ENCODE measurements at regions of chr17 and their contacts with region 1.

Region 1: DNA sequence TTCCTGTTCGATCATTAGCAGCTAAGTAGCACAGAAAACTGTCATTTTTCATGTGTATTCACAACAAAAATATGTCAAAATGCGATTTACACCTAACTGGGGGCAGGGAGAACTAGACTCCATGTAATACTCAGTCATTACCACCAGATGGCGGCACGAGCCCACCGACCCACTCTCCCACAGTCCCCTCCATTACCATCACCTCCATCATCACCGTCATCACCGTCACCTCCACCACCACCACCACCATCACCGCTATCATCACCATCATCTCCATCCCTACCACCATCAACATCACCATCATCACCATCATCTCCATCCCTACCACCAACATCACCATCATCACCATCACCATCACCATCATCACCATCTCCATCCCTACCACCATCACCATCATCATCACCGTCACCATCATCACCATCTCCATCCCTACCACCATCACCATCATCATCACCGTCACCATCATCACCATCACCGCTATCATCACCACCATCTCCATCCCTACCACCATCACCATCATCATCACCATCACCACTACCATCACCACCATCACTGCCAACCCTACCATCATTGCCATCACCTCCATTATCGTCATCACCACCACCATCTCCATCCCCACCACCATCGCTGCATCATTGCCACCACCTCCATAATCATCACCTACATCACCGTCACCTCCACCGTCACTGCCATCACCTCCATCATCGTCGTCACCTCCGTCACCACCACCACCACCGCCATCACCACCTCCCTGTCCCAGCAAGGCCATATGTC is 14.4 kb downstream of the NDUFAF8 start:
- DNase-seq: peak; percentile 43 to 62
- ATAC-seq: peak; percentile 12 to 47; a peak in 3 of 6 replicates
- H3K4me3 ChIP-seq: no peak overlapping the region
- H3K27ac ChIP-seq: no peak overlapping the region
- H3K4me1 ChIP-seq: peaks cover 18% of the 10 kb centered on the region
- CTCF ChIP-seq: peak; percentile 92
- EP300 ChIP-seq: no peak
- POLR2A ChIP-seq: no peak
- RAD21 ChIP-seq: peak; percentile 95 to 98

Region 2: GRCh38 chr17:81090361-81091136 is 163.0 kb before region 1 on chr17:
- CTCF ChIA-PET with region 1: no interaction called
- POLR2A ChIA-PET with region 1: no interaction called
- DNase-seq: peak; percentile 36 to 44
- ATAC-seq: peak in 1 of 2 experiments; percentile 16; a peak in 2 of 6 replicates
- H3K4me3 ChIP-seq: no peak overlapping the region
- H3K27ac ChIP-seq: peak overlapping the region in 1 of 2 experiments; percentile 17; a peak in 2 of 6 replicates
- H3K4me1 ChIP-seq: peaks cover 42% of the 10 kb centered on the region
- CTCF ChIP-seq: no peak
- EP300 ChIP-seq: no peak
- POLR2A ChIP-seq: peak; percentile 7; the same call in 1 of the 2 replicates
- RAD21 ChIP-seq: no peak

Region 3: DNA sequence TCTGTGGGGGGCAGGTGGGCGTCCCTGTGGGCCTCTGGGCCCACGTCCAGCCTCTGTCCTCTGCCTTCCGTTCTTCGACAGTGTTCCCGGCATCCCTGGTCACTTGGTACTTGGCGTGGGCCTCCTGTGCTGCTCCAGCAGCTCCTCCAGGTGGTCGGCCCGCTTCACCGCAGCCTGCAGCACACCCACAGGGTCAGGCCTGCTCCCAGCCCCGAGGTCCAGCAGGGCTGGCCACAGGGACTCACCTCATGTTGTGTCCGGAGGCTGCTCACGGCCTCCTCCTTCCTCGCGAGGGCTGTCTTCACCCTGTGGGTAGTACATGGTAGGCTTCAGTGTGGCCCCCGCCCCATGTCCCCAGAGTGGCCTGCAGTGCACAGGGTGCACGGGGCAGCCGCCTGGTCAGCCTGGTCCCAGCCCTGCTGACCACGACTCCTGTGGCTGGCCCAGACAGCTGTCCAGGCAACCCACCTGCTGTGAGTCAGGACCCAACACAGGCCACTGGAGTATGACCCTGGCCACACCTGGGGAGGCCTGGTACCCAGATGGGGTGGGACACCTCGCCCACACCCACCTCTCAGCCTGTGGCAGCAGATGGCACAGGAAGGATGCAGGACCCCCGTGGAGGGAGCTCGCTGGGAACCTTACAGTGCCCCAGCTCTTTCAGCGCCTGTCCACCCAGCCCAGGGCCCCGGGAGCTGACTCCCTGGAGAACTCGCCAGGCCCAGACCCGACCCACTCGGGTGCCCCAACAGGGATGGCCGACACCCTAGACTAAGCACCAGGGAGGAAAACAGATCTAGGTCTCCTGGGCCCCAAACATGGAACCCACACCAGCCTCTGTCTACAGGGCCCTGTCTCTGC is 63.6 kb before region 1 on chr17:
- CTCF ChIA-PET with region 1: no interaction called
- POLR2A ChIA-PET with region 1: no interaction called
- DNase-seq: peak; percentile 46 to 52
- ATAC-seq: peak; percentile 45 to 80; a peak in 5 of 6 replicates
- H3K4me3 ChIP-seq: no peak overlapping the region
- H3K27ac ChIP-seq: no peak overlapping the region
- H3K4me1 ChIP-seq: no peaks in the 10 kb centered on the region
- CTCF ChIP-seq: peak; percentile 25; the same call in 2 of the 3 replicates
- EP300 ChIP-seq: no peak
- POLR2A ChIP-seq: no peak
- RAD21 ChIP-seq: peak in 1 of 2 experiments; percentile 60; a peak in 4 of 5 replicates

Region 4: GRCh38 chr17:81213978-81214377 is 39.6 kb before region 1 on chr17:
- CTCF ChIA-PET with region 1: no interaction called
- POLR2A ChIA-PET with region 1: no interaction called
- DNase-seq: no peak
- ATAC-seq: no peak
- H3K4me3 ChIP-seq: no peak overlapping the region
- H3K27ac ChIP-seq: no peak overlapping the region
- H3K4me1 ChIP-seq: no peaks in the 10 kb centered on the region
- CTCF ChIP-seq: no peak
- EP300 ChIP-seq: no peak
- POLR2A ChIP-seq: no peak
- RAD21 ChIP-seq: no peak

Region 5: GRCh38 chr17:81270279-81270678 is 16.7 kb after region 1 on chr17:
- CTCF ChIA-PET with region 1: interaction called, 129 read pairs
- POLR2A ChIA-PET with region 1: no interaction called
- DNase-seq: no peak
- ATAC-seq: no peak
- H3K4me3 ChIP-seq: no peak overlapping the region
- H3K27ac ChIP-seq: no peak overlapping the region
- H3K4me1 ChIP-seq: no peaks in the 10 kb centered on the region
- CTCF ChIP-seq: no peak
- EP300 ChIP-seq: no peak
- POLR2A ChIP-seq: no peak
- RAD21 ChIP-seq: no peak

Region 6: GRCh38 chr17:81285179-81285878 is 31.8 kb after region 1 on chr17:
- CTCF ChIA-PET with region 1: interaction called, 129 read pairs
- POLR2A ChIA-PET with region 1: no interaction called
- DNase-seq: no peak
- ATAC-seq: no peak
- H3K4me3 ChIP-seq: no peak overlapping the region
- H3K27ac ChIP-seq: no peak overlapping the region
- H3K4me1 ChIP-seq: no peaks in the 10 kb centered on the region
- CTCF ChIP-seq: no peak
- EP300 ChIP-seq: no peak
- POLR2A ChIP-seq: no peak
- RAD21 ChIP-seq: no peak

Region 7: GRCh38 chr17:81371910-81372760 is 118.6 kb after region 1 on chr17:
- CTCF ChIA-PET with region 1: interaction called, 15 read pairs
- POLR2A ChIA-PET with region 1: no interaction called
- DNase-seq: peak; percentile 73 to 77
- ATAC-seq: peak; percentile 91 to 95
- H3K4me3 ChIP-seq: no peak overlapping the region
- H3K27ac ChIP-seq: peak overlapping the region; percentile 19 to 36; a peak in 2 of 6 replicates
- H3K4me1 ChIP-seq: peaks cover 5% of the 10 kb centered on the region
- CTCF ChIP-seq: peak; percentile 55
- EP300 ChIP-seq: no peak
- POLR2A ChIP-seq: no peak
- RAD21 ChIP-seq: peak; percentile 69 to 71; a peak in 4 of 5 replicates